ENCODE measurements at regions of chr14 and their contacts with region 1.

Region 1: GRCh38 chr14:34227834-34228649 is 234.0 kb downstream of the SPTSSA start:
- DNase-seq: peak; percentile 57 to 67
- H3K4me3 ChIP-seq: no peak overlapping the region
- H3K27ac ChIP-seq: no peak overlapping the region
- H3K4me1 ChIP-seq: no peaks in the 10 kb centered on the region
- H3K27me3 ChIP-seq: no peaks in the 10 kb centered on the region
- CTCF ChIP-seq: peak in 5 of 6 experiments; percentile 57 to 83 (median 71)
- POLR2A ChIP-seq: no peak

Region 2: DNA sequence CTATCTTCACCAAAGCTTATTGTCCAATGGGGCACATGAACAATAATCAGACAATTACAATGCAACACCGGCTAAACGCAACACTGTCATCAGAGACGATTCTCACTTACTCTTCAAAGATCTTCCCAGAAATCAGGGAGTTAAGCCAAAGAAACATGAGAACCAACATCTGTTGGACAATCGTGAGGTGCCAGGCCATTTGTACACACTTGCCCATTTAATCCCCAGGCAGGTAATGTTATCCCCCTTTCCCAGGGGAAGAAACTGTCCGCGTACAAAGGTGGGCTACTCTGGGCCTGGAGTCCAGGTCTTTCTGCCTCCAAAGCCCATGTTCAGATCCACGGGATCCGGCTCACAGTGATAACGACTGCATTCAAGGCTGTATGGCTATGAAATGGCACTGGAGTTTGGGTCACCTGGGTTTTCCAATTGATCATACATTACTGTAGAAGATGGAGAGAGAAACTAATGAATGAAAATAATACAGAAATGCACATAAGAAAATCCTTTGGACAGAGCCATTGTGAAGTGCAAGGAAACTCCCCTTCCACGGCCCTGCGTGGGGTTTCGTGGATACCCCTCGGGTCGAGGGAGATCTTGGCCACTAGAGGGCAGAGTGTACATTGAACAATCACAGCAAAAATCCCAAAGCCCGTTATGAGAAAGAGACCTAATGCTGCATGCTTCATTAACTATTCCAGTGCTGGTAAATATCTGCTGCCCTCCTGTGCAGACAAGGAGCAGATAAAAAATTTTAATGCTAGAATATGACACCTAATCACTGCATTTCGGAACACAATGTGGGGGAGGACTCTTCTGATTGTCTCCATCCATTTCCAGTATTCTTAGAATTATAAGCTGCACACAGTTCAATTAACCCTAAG is 388.6 kb before region 1 on chr14:
- intact Hi-C with region 1: loop called (anchors 5 kb)
- DNase-seq: peak; percentile 39 to 59
- H3K4me3 ChIP-seq: no peak overlapping the region
- H3K27ac ChIP-seq: no peak overlapping the region
- H3K4me1 ChIP-seq: no peaks in the 10 kb centered on the region
- H3K27me3 ChIP-seq: no peaks in the 10 kb centered on the region
- CTCF ChIP-seq: peak; percentile 58 to 80 (median 66)
- POLR2A ChIP-seq: no peak

Region 3: DNA sequence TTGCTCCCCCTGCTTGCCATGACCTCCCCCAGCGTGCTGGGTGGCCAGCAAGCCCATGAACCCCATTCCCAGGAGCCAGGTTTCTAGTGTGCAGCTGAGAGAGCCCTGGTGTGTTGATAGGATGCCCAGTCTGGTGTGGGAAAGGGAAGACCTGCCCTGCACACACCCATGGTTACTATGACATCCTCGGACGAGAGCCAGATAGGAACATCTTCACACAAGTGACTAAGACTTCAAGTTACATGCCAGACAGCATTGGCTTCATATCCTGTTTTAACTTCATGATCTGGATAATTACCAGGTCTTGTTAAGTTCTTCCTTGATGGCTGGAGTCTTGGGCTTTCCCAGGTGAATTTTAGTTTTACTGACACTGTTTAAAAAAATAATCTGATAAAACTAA is 80.6 kb before region 1 on chr14:
- intact Hi-C with region 1: no loop called
- DNase-seq: no peak
- H3K4me3 ChIP-seq: no peak overlapping the region
- H3K27ac ChIP-seq: no peak overlapping the region
- H3K4me1 ChIP-seq: no peaks in the 10 kb centered on the region
- H3K27me3 ChIP-seq: no peaks in the 10 kb centered on the region
- CTCF ChIP-seq: no peak
- POLR2A ChIP-seq: no peak

Region 4: GRCh38 chr14:34190717-34191116 is 37.3 kb before region 1 on chr14:
- intact Hi-C with region 1: no loop called
- DNase-seq: no peak
- H3K4me3 ChIP-seq: no peak overlapping the region
- H3K27ac ChIP-seq: no peak overlapping the region
- H3K4me1 ChIP-seq: no peaks in the 10 kb centered on the region
- H3K27me3 ChIP-seq: no peaks in the 10 kb centered on the region
- CTCF ChIP-seq: no peak
- POLR2A ChIP-seq: no peak